Dorsolateral prefrontal cortex (tissue), 120 donors: ENCODE measurements at regions of chr10 and their contacts with region 1.

Region 1: DNA sequence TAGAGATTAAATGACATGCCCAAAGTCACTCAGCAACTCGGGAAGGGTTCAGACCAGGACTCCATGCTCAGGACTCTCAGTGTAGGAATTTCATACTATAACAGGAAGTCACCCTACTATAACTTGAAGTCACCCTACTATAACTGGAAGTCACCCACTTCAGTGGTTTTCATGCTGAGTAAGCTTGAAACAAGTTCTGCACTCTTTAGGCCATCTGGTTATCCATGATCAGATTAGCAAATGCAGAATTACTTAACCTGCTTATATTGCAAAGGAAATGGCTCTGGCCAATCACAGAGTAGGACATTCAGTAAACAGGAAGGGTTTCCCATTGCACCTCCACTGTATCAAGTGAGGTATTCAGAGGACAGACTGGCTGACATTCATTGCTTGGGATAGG is 1240.4 kb downstream of the GATA3 start:
- DNase-seq: no peak
- H3K4me3 ChIP-seq: no peak overlapping the region
- H3K27ac ChIP-seq: no peak overlapping the region
- H3K27me3 ChIP-seq: peaks cover 0 to 19% (median 0%) of the 10 kb centered on the region in 45 donors
- CTCF ChIP-seq: no peak

Region 2: GRCh38 chr10:9140373-9140772 is 154.5 kb before region 1 on chr10:
- intact Hi-C with region 1: no loop called
- DNase-seq: no peak
- H3K4me3 ChIP-seq: no peak overlapping the region
- H3K27ac ChIP-seq: no peak overlapping the region
- H3K27me3 ChIP-seq: peaks cover 0 to 8% (median 0%) of the 10 kb centered on the region in 45 donors
- CTCF ChIP-seq: no peak

Region 3: GRCh38 chr10:9209105-9209798 is 85.6 kb before region 1 on chr10:
- intact Hi-C with region 1: loop called in 1 of 2 experiments (anchors 5 kb)
- DNase-seq: peak; percentile 46 to 77 (median 62)
- H3K4me3 ChIP-seq: peak overlapping the region in 1 of 59 donors; percentile 20
- H3K27ac ChIP-seq: no peak overlapping the region
- H3K27me3 ChIP-seq: peaks cover 0 to 20% (median 0%) of the 10 kb centered on the region in 45 donors
- CTCF ChIP-seq: peak; percentile 77 to 98 (median 92)